ENCODE measurements at regions of chr3 and their contacts with region 1.

Region 1: DNA sequence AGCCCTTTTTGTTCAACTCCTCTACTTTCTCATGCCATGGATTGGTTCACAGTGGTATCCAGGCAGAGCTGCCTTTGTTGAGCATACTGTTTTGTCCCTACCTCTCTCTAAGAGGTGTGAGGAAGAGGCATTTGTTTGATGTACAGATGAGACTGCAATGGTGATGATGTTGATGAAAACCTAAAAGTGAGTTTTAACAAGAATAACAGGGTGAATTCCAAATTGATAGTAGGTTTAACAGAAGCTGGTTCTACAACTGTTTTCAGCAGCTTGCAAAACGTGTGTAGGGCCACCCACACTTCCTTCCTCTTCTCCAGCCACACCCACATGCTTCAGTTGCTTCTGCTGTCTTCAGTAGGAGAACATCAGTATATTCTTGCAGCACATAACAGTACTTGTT is 10.2 kb downstream of the SNRK start:
- DNase-seq: no peak
- H3K4me3 Mint-ChIP-seq: no peak overlapping the region
- H3K27ac Mint-ChIP-seq: no peak overlapping the region
- H3K4me1 Mint-ChIP-seq: peaks cover 18% of the 10 kb centered on the region
- H3K27me3 Mint-ChIP-seq: no peaks in the 10 kb centered on the region
- CTCF ChIP-seq: no peak

Region 2: DNA sequence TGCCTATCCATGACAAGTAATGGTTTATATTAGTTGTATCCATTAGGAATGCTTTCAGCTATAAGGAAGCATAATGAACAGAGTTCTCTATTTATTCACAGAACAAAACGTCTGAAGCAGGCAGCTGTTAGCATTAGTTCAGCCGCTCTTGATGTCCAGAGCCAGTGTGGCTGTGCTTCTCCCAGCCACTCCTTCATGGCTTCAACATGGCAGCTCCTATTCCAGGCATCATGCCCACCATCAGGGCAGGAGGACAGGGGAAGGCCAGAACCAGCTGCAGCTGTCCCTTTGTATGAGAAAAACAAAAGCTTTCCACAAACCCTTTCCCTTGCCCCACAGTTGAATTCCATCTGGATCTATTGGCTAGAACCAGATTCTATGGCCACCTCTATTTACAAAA is 23.1 kb before region 1 on chr3:
- CTCF ChIA-PET with region 1: no interaction called
- intact Hi-C with region 1: no loop called
- DNase-seq: no peak
- H3K4me3 Mint-ChIP-seq: no peak overlapping the region
- H3K27ac Mint-ChIP-seq: no peak overlapping the region
- H3K4me1 Mint-ChIP-seq: no peaks in the 10 kb centered on the region
- H3K27me3 Mint-ChIP-seq: no peaks in the 10 kb centered on the region
- CTCF ChIP-seq: no peak

Region 3: GRCh38 chr3:43503067-43503728 is 206.6 kb after region 1 on chr3:
- CTCF ChIA-PET with region 1: no interaction called
- intact Hi-C with region 1: loop called (anchors 10 kb)
- DNase-seq: no peak
- H3K4me3 Mint-ChIP-seq: no peak overlapping the region
- H3K27ac Mint-ChIP-seq: no peak overlapping the region
- H3K4me1 Mint-ChIP-seq: no peaks in the 10 kb centered on the region
- H3K27me3 Mint-ChIP-seq: no peaks in the 10 kb centered on the region
- CTCF ChIP-seq: no peak

Measured in Calu3 (cell line).